ENCODE measurements at regions of chr1 and their contacts with region 1.

Region 1: DNA sequence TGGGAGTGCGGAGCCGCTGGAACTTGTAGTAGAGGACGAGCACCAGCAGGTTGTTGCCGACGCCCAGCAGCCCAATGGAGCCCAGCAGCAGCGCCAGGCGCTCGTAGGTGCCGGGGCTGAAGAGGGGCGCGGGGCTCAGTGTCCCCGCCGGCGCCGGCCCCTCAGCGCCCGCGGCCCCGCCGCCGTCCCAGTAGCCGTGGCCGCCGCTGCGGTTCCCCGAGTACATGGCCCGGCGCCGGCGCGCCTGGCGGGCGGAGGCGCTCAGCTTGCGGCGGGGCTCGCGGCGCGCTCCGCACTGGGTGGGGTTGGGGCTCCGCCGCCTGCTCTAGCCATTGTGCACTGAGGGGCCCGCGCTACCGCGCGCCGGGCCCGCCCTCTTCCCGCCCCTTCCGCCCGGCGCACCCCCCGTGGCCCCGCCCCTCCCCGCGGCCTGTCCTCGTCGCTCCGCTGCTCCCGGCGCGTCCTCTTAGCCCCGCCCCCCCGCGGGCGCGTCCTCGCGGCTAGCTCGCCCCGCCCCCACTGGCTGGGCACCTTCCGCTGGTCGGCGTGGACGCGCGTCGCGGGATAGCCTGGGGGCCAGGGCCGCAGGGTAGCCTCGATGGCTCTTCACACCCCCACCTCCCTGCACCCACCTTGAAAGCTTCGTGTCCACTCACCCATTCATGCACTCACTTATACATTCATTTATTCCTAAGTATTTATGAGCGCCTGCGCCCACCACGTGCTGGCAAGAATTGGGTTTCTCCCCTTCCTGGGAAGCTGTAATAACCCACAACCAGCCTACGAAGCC is at the starts of genes CHML and OPN3:
- DNase-seq: peak; percentile 82 to 95 (median 89)
- ATAC-seq: peak; percentile 96
- H3K4me3 ChIP-seq: peak within 1 kb of the TSS; percentile 90 to 95
- H3K4me3 Mint-ChIP-seq: peak within 1 kb of the TSS; percentile 82
- H3K27ac ChIP-seq: peak within 1 kb of the TSS; percentile 62 to 77
- H3K27ac Mint-ChIP-seq: peak within 1 kb of the TSS; percentile 92
- H3K4me1 ChIP-seq: peaks cover 32% of the 10 kb centered on the region
- H3K4me1 Mint-ChIP-seq: peaks cover 37% of the 10 kb centered on the region
- H3K27me3 ChIP-seq: no peaks in the 10 kb centered on the region
- H3K27me3 Mint-ChIP-seq: no peaks in the 10 kb centered on the region
- CTCF ChIP-seq: no peak
- total RNA-seq, gene CHML: 8.3 to 8.8 TPM
- total RNA-seq, gene OPN3: 1.2 to 1.4 TPM

Region 2: GRCh38 chr1:241519308-241520079 is 120.7 kb before region 1 on chr1 and contains the start of gene FH:
- CTCF ChIA-PET with region 1: no interaction called
- POLR2A ChIA-PET with region 1: no interaction called
- intact Hi-C with region 1: loop called in 1 of 2 experiments (anchors 5 kb)
- DNase-seq: peak; percentile 83 to 98 (median 92)
- ATAC-seq: peak; percentile 98
- H3K4me3 ChIP-seq: peak within 1 kb of the TSS; percentile 56 to 75
- H3K4me3 Mint-ChIP-seq: peak within 1 kb of the TSS; percentile 94
- H3K27ac ChIP-seq: peak within 1 kb of the TSS; percentile 50 to 64
- H3K27ac Mint-ChIP-seq: peak within 1 kb of the TSS; percentile 90
- H3K4me1 ChIP-seq: peaks cover 11% of the 10 kb centered on the region
- H3K4me1 Mint-ChIP-seq: peaks cover 30% of the 10 kb centered on the region
- H3K27me3 ChIP-seq: peaks cover 5 to 6% of the 10 kb centered on the region in 2 experiments
- H3K27me3 Mint-ChIP-seq: peaks cover 22% of the 10 kb centered on the region
- CTCF ChIP-seq: no peak
- total RNA-seq, gene FH: 12.1 to 14.0 TPM

Region 3: GRCh38 chr1:241627453-241628259 is 12.6 kb before region 1 on chr1:
- CTCF ChIA-PET with region 1: interaction called, 3 read pairs
- POLR2A ChIA-PET with region 1: interaction called, 6 read pairs
- intact Hi-C with region 1: loop called in 1 of 2 experiments (anchors 1 kb)
- DNase-seq: peak in 6 of 9 experiments; percentile 13 to 81 (median 43)
- ATAC-seq: peak; percentile 77
- H3K4me3 ChIP-seq: peak overlapping the region; percentile 25 to 29
- H3K4me3 Mint-ChIP-seq: peak overlapping the region; percentile 77
- H3K27ac ChIP-seq: peak overlapping the region; percentile 38 to 45
- H3K27ac Mint-ChIP-seq: peak overlapping the region; percentile 92
- H3K4me1 ChIP-seq: peaks cover 4% of the 10 kb centered on the region
- H3K4me1 Mint-ChIP-seq: peaks cover 24% of the 10 kb centered on the region
- H3K27me3 ChIP-seq: no peaks in the 10 kb centered on the region
- H3K27me3 Mint-ChIP-seq: no peaks in the 10 kb centered on the region
- CTCF ChIP-seq: peak; percentile 79

Region 4: GRCh38 chr1:241677201-241677600 is 37.0 kb after region 1 on chr1:
- CTCF ChIA-PET with region 1: interaction called, 3 read pairs
- POLR2A ChIA-PET with region 1: interaction called, 7 read pairs
- intact Hi-C with region 1: loop called (anchors 1 to 5 kb)
- DNase-seq: peak in 6 of 9 experiments; percentile 9 to 81 (median 24)
- ATAC-seq: peak; percentile 92
- H3K4me3 ChIP-seq: peak overlapping the region; percentile 3 to 28
- H3K4me3 Mint-ChIP-seq: peak overlapping the region; percentile 70
- H3K27ac ChIP-seq: peak overlapping the region; percentile 1 to 63
- H3K27ac Mint-ChIP-seq: peak overlapping the region; percentile 87
- H3K4me1 ChIP-seq: peaks cover 25% of the 10 kb centered on the region
- H3K4me1 Mint-ChIP-seq: peaks cover 21% of the 10 kb centered on the region
- H3K27me3 ChIP-seq: no peaks in the 10 kb centered on the region
- H3K27me3 Mint-ChIP-seq: no peaks in the 10 kb centered on the region
- CTCF ChIP-seq: no peak

Region 5: GRCh38 chr1:241706954-241707365 is 66.7 kb after region 1 on chr1:
- CTCF ChIA-PET with region 1: no interaction called
- POLR2A ChIA-PET with region 1: interaction called, 12 read pairs
- intact Hi-C with region 1: loop called in 1 of 2 experiments (anchors 2 kb)
- DNase-seq: peak; percentile 9 to 83 (median 58)
- ATAC-seq: peak; percentile 92
- H3K4me3 ChIP-seq: no peak overlapping the region
- H3K4me3 Mint-ChIP-seq: peak overlapping the region; percentile 54
- H3K27ac ChIP-seq: no peak overlapping the region
- H3K27ac Mint-ChIP-seq: peak overlapping the region; percentile 53
- H3K4me1 ChIP-seq: peaks cover 21% of the 10 kb centered on the region
- H3K4me1 Mint-ChIP-seq: peaks cover 35% of the 10 kb centered on the region
- H3K27me3 ChIP-seq: no peaks in the 10 kb centered on the region
- H3K27me3 Mint-ChIP-seq: no peaks in the 10 kb centered on the region
- CTCF ChIP-seq: no peak

Region 6: GRCh38 chr1:241716915-241717656 is 76.9 kb after region 1 on chr1:
- CTCF ChIA-PET with region 1: no interaction called
- POLR2A ChIA-PET with region 1: no interaction called
- intact Hi-C with region 1: loop called (anchors 1 to 5 kb)
- DNase-seq: peak in 6 of 9 experiments; percentile 14 to 63 (median 42)
- ATAC-seq: peak; percentile 98
- H3K4me3 ChIP-seq: no peak overlapping the region
- H3K4me3 Mint-ChIP-seq: no peak overlapping the region
- H3K27ac ChIP-seq: no peak overlapping the region
- H3K27ac Mint-ChIP-seq: no peak overlapping the region
- H3K4me1 ChIP-seq: peaks cover 15% of the 10 kb centered on the region
- H3K4me1 Mint-ChIP-seq: peaks cover 22% of the 10 kb centered on the region
- H3K27me3 ChIP-seq: no peaks in the 10 kb centered on the region
- H3K27me3 Mint-ChIP-seq: no peaks in the 10 kb centered on the region
- CTCF ChIP-seq: no peak

Region 7: GRCh38 chr1:241847796-241848685 is 207.8 kb after region 1 on chr1 and contains the start of gene EXO1:
- CTCF ChIA-PET with region 1: no interaction called
- POLR2A ChIA-PET with region 1: interaction called, 5 read pairs
- intact Hi-C with region 1: loop called (anchors 1 to 2 kb)
- DNase-seq: peak; percentile 78 to 95 (median 88)
- ATAC-seq: peak; percentile 97
- H3K4me3 ChIP-seq: peak within 1 kb of the TSS; percentile 94 to 100
- H3K4me3 Mint-ChIP-seq: peak within 1 kb of the TSS; percentile 100
- H3K27ac ChIP-seq: peak within 1 kb of the TSS; percentile 94 to 98
- H3K27ac Mint-ChIP-seq: peak within 1 kb of the TSS; percentile 99
- H3K4me1 ChIP-seq: peaks cover 9% of the 10 kb centered on the region
- H3K4me1 Mint-ChIP-seq: peaks cover 18% of the 10 kb centered on the region
- H3K27me3 ChIP-seq: no peaks in the 10 kb centered on the region
- H3K27me3 Mint-ChIP-seq: no peaks in the 10 kb centered on the region
- CTCF ChIP-seq: peak; percentile 29
- total RNA-seq, gene EXO1: 1.5 to 2.4 TPM

Region 8: DNA sequence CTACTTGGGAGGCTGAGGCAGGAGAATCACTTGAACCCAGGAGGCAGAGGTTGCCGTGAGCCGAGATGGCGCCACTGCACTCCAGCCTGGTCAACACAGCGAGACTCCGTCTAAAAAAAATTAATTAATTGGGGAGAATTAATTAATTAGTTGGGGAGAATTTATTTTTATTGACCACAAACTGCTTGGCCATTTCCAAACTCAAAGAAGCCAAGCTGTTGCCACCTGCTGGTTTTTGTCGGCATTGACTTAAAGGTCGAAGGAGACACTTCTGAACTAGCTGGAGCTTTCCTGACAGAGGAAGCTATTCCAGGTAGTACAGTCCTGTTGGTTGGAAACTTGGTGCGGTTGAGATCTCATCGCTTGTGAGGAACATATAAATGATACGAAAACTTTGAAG is 345.6 kb after region 1 on chr1:
- CTCF ChIA-PET with region 1: no interaction called
- POLR2A ChIA-PET with region 1: no interaction called
- intact Hi-C with region 1: no loop called
- DNase-seq: peak in 2 of 9 experiments; percentile 7 to 13
- ATAC-seq: no peak
- H3K4me3 ChIP-seq: no peak overlapping the region
- H3K4me3 Mint-ChIP-seq: no peak overlapping the region
- H3K27ac ChIP-seq: no peak overlapping the region
- H3K27ac Mint-ChIP-seq: no peak overlapping the region
- H3K4me1 ChIP-seq: no peaks in the 10 kb centered on the region
- H3K4me1 Mint-ChIP-seq: no peaks in the 10 kb centered on the region
- H3K27me3 ChIP-seq: peaks cover 0 to 2% of the 10 kb centered on the region in 2 experiments
- H3K27me3 Mint-ChIP-seq: peaks cover 7% of the 10 kb centered on the region
- CTCF ChIP-seq: no peak

Measured in CD8-positive, alpha-beta T cell (primary cell).